Dorsolateral prefrontal cortex (tissue), 120 donors: ENCODE measurements at regions of chr13 and their contacts with region 1.

Region 1: DNA sequence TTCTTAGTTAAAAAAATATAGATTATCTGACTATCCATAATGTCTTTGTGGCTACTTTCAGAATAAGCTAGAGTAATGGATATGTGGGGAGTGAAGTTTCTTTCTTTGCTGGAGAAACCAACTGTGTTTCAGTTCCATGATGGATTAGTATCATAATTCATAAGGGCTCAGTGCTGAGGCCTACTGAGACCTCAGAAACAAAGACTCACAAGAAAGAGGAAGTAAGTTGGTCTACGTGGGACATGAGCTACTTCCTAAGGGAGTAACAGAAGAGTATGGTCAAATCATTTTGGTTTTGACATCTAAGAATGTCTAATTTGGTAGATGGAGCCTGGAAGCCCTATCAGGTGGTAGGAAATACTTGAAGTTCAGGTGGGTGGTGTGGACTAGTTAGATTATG is 99.0 kb upstream of the HTR2A start:
- DNase-seq: no peak
- H3K4me3 ChIP-seq: no peak overlapping the region
- H3K27ac ChIP-seq: no peak overlapping the region
- H3K27me3 ChIP-seq: no peaks in the 10 kb centered on the region
- CTCF ChIP-seq: no peak

Region 2: GRCh38 chr13:47146991-47147811 is 151.3 kb after region 1 on chr13:
- intact Hi-C with region 1: no loop called
- DNase-seq: no peak
- H3K4me3 ChIP-seq: no peak overlapping the region
- H3K27ac ChIP-seq: no peak overlapping the region
- H3K27me3 ChIP-seq: no peaks in the 10 kb centered on the region
- CTCF ChIP-seq: no peak

Region 3: GRCh38 chr13:48741377-48741776 is 1745.5 kb after region 1 on chr13:
- intact Hi-C with region 1: loop called in 1 of 2 experiments (anchors 5 kb)
- DNase-seq: no peak
- H3K4me3 ChIP-seq: no peak overlapping the region
- H3K27ac ChIP-seq: no peak overlapping the region
- H3K27me3 ChIP-seq: no peaks in the 10 kb centered on the region
- CTCF ChIP-seq: no peak